Common myeloid progenitor, CD34-positive (primary cell): ENCODE measurements at regions of chr2 and their contacts with region 1.

Region 1: GRCh38 chr2:182650704-182651103 is 65.4 kb upstream of the DNAJC10 start:
- DNase-seq: peak; percentile 50 to 71 (median 64)
- H3K4me3 ChIP-seq: peak overlapping the region in 1 of 7 experiments; percentile 11
- H3K27ac ChIP-seq: no peak overlapping the region
- H3K4me1 ChIP-seq: no peaks in the 10 kb centered on the region
- H3K27me3 ChIP-seq: no peaks in the 10 kb centered on the region

Region 2: GRCh38 chr2:182186132-182186735 is 464.5 kb before region 1 on chr2:
- CTCF ChIA-PET with region 1: interaction called, 40 read pairs
- POLR2A ChIA-PET with region 1: no interaction called
- DNase-seq: peak; percentile 28 to 58 (median 48)
- H3K4me3 ChIP-seq: no peak overlapping the region
- H3K27ac ChIP-seq: no peak overlapping the region
- H3K4me1 ChIP-seq: no peaks in the 10 kb centered on the region
- H3K27me3 ChIP-seq: no peaks in the 10 kb centered on the region

Region 3: DNA sequence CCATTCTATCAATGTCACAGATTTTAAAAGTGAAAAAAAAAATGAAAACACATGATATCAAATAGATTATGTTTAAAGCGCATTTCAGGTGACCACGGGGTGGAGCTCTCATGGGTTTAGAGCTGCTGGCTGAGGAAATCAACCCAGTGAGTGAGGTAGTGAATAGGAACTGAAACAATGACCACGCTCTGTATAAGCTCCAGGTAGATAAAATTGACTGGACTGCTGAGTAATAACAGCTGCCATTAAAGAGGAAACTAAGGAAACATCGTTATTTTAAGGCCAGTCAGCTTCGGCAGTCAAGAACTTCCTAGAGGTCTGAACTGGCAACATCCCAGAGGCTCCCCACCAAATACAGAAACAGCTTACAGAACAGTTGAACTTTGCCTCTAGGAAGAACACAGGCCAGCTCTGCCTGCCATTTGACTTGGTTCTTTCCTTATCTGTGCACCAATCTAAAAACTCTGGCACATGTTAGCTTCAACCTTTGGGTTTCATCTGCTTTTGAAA is 409.8 kb before region 1 on chr2:
- CTCF ChIA-PET with region 1: interaction called, 36 read pairs
- POLR2A ChIA-PET with region 1: interaction called, 4 read pairs
- DNase-seq: peak; percentile 56 to 76 (median 74)
- H3K4me3 ChIP-seq: peak overlapping the region in 1 of 7 experiments; percentile 27
- H3K27ac ChIP-seq: no peak overlapping the region
- H3K4me1 ChIP-seq: peaks cover 0 to 7% (median 0%) of the 10 kb centered on the region in 4 experiments
- H3K27me3 ChIP-seq: no peaks in the 10 kb centered on the region

Region 4: GRCh38 chr2:182628916-182629315 is 21.8 kb before region 1 on chr2:
- CTCF ChIA-PET with region 1: no interaction called
- POLR2A ChIA-PET with region 1: no interaction called
- DNase-seq: no peak
- H3K4me3 ChIP-seq: no peak overlapping the region
- H3K27ac ChIP-seq: no peak overlapping the region
- H3K4me1 ChIP-seq: no peaks in the 10 kb centered on the region
- H3K27me3 ChIP-seq: no peaks in the 10 kb centered on the region

Region 5: GRCh38 chr2:182907081-182907830 is 256.6 kb after region 1 on chr2:
- CTCF ChIA-PET with region 1: no interaction called
- POLR2A ChIA-PET with region 1: no interaction called
- DNase-seq: no peak
- H3K4me3 ChIP-seq: no peak overlapping the region
- H3K27ac ChIP-seq: no peak overlapping the region
- H3K4me1 ChIP-seq: no peaks in the 10 kb centered on the region
- H3K27me3 ChIP-seq: no peaks in the 10 kb centered on the region